Naive thymus-derived CD4-positive, alpha-beta T cell (primary cell): ENCODE measurements at regions of chr3 and their contacts with region 1.

Region 1: DNA sequence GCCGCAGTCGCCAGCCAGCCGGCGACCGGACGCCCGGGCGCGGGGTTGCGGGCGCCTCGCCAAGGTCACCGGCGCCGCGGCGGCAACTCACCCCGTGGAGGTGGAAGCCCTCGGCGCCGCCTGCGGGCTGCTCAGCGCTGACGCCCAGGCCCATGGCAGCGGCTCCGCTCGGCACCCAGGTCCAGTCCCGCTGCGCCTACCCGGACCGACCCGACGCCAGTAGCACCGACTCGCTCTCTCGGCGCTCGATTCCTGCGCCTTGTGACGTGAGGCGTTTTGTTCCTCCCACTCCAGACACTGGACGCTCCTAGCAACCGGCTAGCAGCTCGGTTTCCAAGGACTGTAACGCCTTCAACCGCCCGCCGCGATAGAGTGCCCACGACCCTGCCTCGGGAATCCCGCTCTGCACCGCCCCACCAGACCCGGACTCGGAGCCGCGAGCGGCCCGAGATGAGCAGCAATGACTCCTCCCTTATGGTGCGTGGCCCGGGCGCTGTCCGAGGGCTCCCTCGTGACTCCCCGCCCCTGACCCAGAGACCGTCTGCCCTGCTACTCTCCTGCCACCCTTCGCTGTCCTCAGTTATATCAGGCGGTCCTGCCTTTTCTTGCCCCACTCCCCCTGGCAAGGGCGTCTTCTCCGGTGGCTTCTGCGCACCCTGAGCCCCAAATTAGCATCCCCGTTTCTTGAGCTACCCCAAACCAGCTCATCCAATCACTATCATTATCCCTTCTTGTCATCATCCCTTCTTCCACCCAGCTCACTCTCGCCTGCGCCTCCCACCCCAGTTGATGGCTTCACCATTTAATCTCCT is at the starts of genes GORASP1 and TTC21A:
- DNase-seq: peak; percentile 33 to 79 (median 53)
- ATAC-seq: peak; percentile 74
- H3K4me3 ChIP-seq: peak within 1 kb of the TSS; percentile 95
- H3K4me3 Mint-ChIP-seq: peak within 1 kb of the TSS; percentile 88 to 100 (median 96)
- H3K27ac ChIP-seq: peak within 1 kb of the TSS; percentile 78
- H3K27ac Mint-ChIP-seq: peak within 1 kb of the TSS; percentile 84 to 96 (median 92)
- H3K4me1 ChIP-seq: peaks cover 18 to 22% of the 10 kb centered on the region in 2 donors
- H3K4me1 Mint-ChIP-seq: peaks cover 45 to 62% (median 52%) of the 10 kb centered on the region in 7 donors
- H3K27me3 ChIP-seq: no peaks in the 10 kb centered on the region
- H3K27me3 Mint-ChIP-seq: peaks cover 0 to 5% (median 0%) of the 10 kb centered on the region in 5 donors
- total RNA-seq, gene GORASP1: 28.2 to 58.5 (median 44.6) TPM
- total RNA-seq, gene TTC21A: 2.8 to 9.7 (median 5.3) TPM

Region 2: GRCh38 chr3:38725726-38726419 is 381.7 kb before region 1 on chr3:
- CTCF ChIA-PET with region 1: no interaction called
- POLR2A ChIA-PET with region 1: no interaction called
- intact Hi-C with region 1: no loop called
- DNase-seq: no peak
- ATAC-seq: no peak
- H3K4me3 ChIP-seq: no peak overlapping the region
- H3K4me3 Mint-ChIP-seq: no peak overlapping the region
- H3K27ac ChIP-seq: no peak overlapping the region
- H3K27ac Mint-ChIP-seq: no peak overlapping the region
- H3K4me1 ChIP-seq: no peaks in the 10 kb centered on the region
- H3K4me1 Mint-ChIP-seq: peaks cover 0 to 5% (median 0%) of the 10 kb centered on the region in 7 donors
- H3K27me3 ChIP-seq: no peaks in the 10 kb centered on the region
- H3K27me3 Mint-ChIP-seq: peaks cover 3 to 31% (median 24%) of the 10 kb centered on the region in 5 donors

Region 3: GRCh38 chr3:39146984-39147591 is 39.5 kb after region 1 on chr3:
- CTCF ChIA-PET with region 1: interaction called, 4 read pairs
- POLR2A ChIA-PET with region 1: interaction called, 6 read pairs
- intact Hi-C with region 1: loop called (anchors 1 kb)
- DNase-seq: peak in 6 of 9 donors; percentile 22 to 73 (median 44)
- ATAC-seq: peak; percentile 63
- H3K4me3 ChIP-seq: peak overlapping the region; percentile 59
- H3K4me3 Mint-ChIP-seq: peak overlapping the region; percentile 85 to 99 (median 95)
- H3K27ac ChIP-seq: peak overlapping the region; percentile 64
- H3K27ac Mint-ChIP-seq: peak overlapping the region; percentile 92 to 99 (median 98)
- H3K4me1 ChIP-seq: peaks cover 52 to 61% of the 10 kb centered on the region in 2 donors
- H3K4me1 Mint-ChIP-seq: peaks cover 67 to 81% (median 75%) of the 10 kb centered on the region in 7 donors
- H3K27me3 ChIP-seq: no peaks in the 10 kb centered on the region
- H3K27me3 Mint-ChIP-seq: no peaks in the 10 kb centered on the region

Region 4: GRCh38 chr3:39180546-39181346 is 73.2 kb after region 1 on chr3:
- CTCF ChIA-PET with region 1: interaction called, 4 read pairs
- POLR2A ChIA-PET with region 1: interaction called, 4 read pairs
- intact Hi-C with region 1: loop called (anchors 1 kb)
- DNase-seq: peak; percentile 80 to 86 (median 83)
- ATAC-seq: peak; percentile 94
- H3K4me3 ChIP-seq: peak overlapping the region; percentile 74
- H3K4me3 Mint-ChIP-seq: peak overlapping the region; percentile 79 to 94 (median 87)
- H3K27ac ChIP-seq: peak overlapping the region; percentile 68
- H3K27ac Mint-ChIP-seq: peak overlapping the region; percentile 71 to 94 (median 88)
- H3K4me1 ChIP-seq: peaks cover 23 to 33% of the 10 kb centered on the region in 2 donors
- H3K4me1 Mint-ChIP-seq: peaks cover 24 to 51% (median 38%) of the 10 kb centered on the region in 7 donors
- H3K27me3 ChIP-seq: no peaks in the 10 kb centered on the region
- H3K27me3 Mint-ChIP-seq: no peaks in the 10 kb centered on the region

Region 5: GRCh38 chr3:39255503-39256325 is 148.1 kb after region 1 on chr3:
- CTCF ChIA-PET with region 1: no interaction called
- POLR2A ChIA-PET with region 1: no interaction called
- intact Hi-C with region 1: no loop called
- DNase-seq: no peak
- ATAC-seq: peak; percentile 94
- H3K4me3 ChIP-seq: no peak overlapping the region
- H3K4me3 Mint-ChIP-seq: no peak overlapping the region
- H3K27ac ChIP-seq: no peak overlapping the region
- H3K27ac Mint-ChIP-seq: peak overlapping the region in 2 of 9 donors; percentile 3 to 29
- H3K4me1 ChIP-seq: peaks cover 0 to 45% of the 10 kb centered on the region in 2 donors
- H3K4me1 Mint-ChIP-seq: peaks cover under 1 to 39% (median 2%) of the 10 kb centered on the region in 7 donors
- H3K27me3 ChIP-seq: no peaks in the 10 kb centered on the region
- H3K27me3 Mint-ChIP-seq: peaks cover 0 to 26% (median 14%) of the 10 kb centered on the region in 5 donors